Breast epithelium (tissue), 4 donors: ENCODE measurements at regions of chr6 and their contacts with region 1.

Region 1: DNA sequence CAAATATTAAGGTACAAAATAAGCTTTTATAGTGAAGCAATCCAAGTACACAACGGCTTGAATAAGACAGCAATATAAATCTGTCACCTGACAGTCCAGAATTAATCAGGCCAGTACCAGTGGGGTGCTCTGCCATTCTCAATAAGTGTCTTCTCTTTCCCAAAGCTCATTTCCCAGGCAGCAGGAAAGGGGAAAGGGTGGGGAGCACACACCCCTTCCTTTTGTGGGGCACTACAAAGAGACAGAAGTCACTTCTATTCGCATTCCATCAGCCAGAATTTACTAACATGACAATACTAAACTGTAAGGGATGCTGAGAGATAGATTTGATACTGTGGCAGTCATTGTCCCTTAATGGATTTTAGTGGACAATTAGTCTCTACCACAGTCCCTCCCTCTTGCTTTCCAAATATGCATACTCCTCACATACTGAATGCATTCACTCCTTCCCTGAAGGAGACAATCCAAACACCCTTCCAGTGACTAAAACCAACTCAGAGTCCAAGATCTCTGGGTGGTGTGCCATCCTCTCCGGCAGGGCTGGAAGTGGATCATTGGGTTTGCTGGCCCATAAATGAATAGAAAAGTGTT is 50.4 kb downstream of the ABRACL start:
- DNase-seq: no peak
- H3K4me3 ChIP-seq: no peak overlapping the region
- H3K27ac ChIP-seq: no peak overlapping the region
- H3K4me1 ChIP-seq: no peaks in the 10 kb centered on the region
- H3K27me3 ChIP-seq: no peaks in the 10 kb centered on the region
- CTCF ChIP-seq: no peak
- POLR2A ChIP-seq: no peak

Region 2: GRCh38 chr6:139364302-139364981 is 285.5 kb after region 1 on chr6:
- intact Hi-C with region 1: loop called (anchors 5 kb)
- DNase-seq: no peak
- H3K4me3 ChIP-seq: no peak overlapping the region
- H3K27ac ChIP-seq: no peak overlapping the region
- H3K4me1 ChIP-seq: peaks cover 0 to 6% of the 10 kb centered on the region in 2 donors
- H3K27me3 ChIP-seq: no peaks in the 10 kb centered on the region
- CTCF ChIP-seq: peak; percentile 82 to 91 (median 85)
- POLR2A ChIP-seq: no peak